Motor neuron (in vitro differentiated cells): ENCODE measurements at regions of chr20 and their contacts with region 1.

Region 1: DNA sequence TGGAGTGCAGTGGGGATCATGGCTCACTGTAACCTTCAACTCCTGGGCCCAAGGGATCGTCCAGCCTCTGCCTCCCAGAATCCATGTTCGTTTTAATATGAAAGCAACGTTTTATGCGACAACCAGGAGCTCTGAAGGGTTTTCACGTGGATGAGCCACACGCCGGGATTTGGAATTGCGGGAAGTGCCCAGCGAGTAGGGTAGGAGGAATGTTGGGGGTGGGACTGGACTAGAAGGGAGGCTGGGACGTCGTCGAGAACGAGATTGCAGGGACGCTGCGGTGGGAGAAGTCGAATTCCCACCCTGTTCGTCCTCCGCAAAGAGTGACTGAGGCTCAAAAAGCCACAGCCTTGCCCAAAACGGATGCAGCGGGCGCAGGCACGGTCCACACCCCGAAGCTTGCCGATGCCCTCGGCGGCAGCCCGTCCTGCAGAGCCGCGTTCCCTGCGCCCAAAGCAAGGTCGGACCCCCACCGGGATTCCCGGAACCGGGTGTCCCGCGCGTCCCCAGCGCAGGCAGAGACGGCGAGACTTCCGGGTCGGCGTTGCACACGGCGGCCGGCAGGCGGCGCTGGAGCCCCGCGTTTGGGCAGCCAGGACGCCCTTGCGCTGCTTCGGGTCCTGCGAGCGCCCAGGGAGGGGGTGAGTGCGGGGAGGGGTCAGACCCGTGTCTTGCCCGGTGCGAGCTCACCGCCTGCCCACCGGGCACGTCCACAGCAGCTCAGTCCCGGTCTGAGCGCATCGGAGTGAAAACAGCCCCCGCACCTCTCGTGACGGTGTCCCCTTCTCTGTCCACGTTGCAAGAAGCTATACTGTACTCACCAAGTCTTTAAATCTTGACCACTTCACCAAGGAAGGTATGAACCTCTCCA is 87.8 kb downstream of the DHX35 start:
- ATAC-seq: peak; percentile 87 to 91 (median 90)
- H3K4me3 ChIP-seq: peak overlapping the region; percentile 46 to 83 (median 53)
- H3K27ac ChIP-seq: no peak overlapping the region
- H3K4me1 ChIP-seq: peaks cover 18% of the 10 kb centered on the region in 2 donors

Region 2: GRCh38 chr20:38674092-38674764 is 375.7 kb before region 1 on chr20:
- in situ Hi-C with region 1: loop called in 1 of 9 experiments (anchors 25 kb)
- ATAC-seq: peak; percentile 78 to 93 (median 82)
- H3K4me3 ChIP-seq: peak overlapping the region; percentile 44 to 77 (median 65)
- H3K27ac ChIP-seq: peak overlapping the region; percentile 58 to 78
- H3K4me1 ChIP-seq: peaks cover 6 to 13% of the 10 kb centered on the region in 2 donors

Region 3: GRCh38 chr20:38907918-38908677 is 141.8 kb before region 1 on chr20:
- in situ Hi-C with region 1: loop called in 1 of 9 experiments (anchors 25 kb)
- ATAC-seq: no peak
- H3K4me3 ChIP-seq: no peak overlapping the region
- H3K27ac ChIP-seq: no peak overlapping the region
- H3K4me1 ChIP-seq: no peaks in the 10 kb centered on the region